ENCODE measurements at regions of chr20 and their contacts with region 1.

Region 1: GRCh38 chr20:2967841-2968240 is 75.6 kb upstream of the GNRH2 start:
- DNase-seq: no peak
- ATAC-seq: no peak
- H3K4me3 ChIP-seq: no peak overlapping the region
- H3K27ac ChIP-seq: no peak overlapping the region
- H3K4me1 ChIP-seq: no peaks in the 10 kb centered on the region
- H3K27me3 ChIP-seq: no peaks in the 10 kb centered on the region
- CTCF ChIP-seq: no peak

Region 2: DNA sequence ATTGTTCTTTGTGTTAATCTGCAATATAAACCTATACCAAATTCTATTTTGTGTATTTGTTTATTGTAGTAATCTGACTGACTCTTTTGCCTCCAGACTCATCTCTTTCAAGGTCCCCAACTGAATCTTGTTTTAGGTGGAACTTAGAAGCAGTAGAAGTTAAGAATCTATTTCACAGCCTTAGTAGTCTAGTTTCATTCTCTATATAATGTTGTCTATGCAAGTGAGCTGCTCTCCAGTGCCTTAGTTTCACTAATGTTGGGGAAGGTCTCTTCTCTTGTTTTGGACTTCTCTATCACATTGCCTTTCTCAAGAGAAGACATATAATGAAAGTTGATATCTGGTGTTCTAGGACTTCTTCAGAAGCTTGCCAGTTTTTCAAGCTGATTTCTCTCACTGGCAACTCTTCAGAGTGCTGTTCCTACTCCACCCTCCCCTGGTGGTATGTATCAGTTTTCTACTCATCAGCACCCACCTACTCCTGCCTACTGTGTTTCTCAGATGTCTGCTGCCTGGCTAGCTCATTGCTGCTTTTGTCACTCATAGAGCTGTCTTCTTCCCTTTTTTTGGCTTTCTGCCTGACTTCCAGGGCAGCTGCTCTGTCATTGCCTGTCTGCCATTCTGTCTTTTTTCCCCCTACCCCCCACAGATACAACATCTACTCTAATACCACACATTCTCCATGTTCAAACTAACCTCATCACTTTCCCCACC is 12.4 kb before region 1 on chr20:
- CTCF ChIA-PET with region 1: no interaction called
- POLR2A ChIA-PET with region 1: interaction called, 12 read pairs
- intact Hi-C with region 1: no loop called
- DNase-seq: no peak
- ATAC-seq: no peak
- H3K4me3 ChIP-seq: no peak overlapping the region
- H3K27ac ChIP-seq: no peak overlapping the region
- H3K4me1 ChIP-seq: no peaks in the 10 kb centered on the region
- H3K27me3 ChIP-seq: no peaks in the 10 kb centered on the region
- CTCF ChIP-seq: no peak